ENCODE measurements at regions of chr10 and their contacts with region 1.

Region 1: GRCh38 chr10:33134011-33134751 is 176.2 kb upstream of the ITGB1 start:
- DNase-seq: no peak
- ATAC-seq: peak; percentile 64
- H3K4me3 ChIP-seq: no peak overlapping the region
- H3K4me3 Mint-ChIP-seq: no peak overlapping the region
- H3K27ac ChIP-seq: no peak overlapping the region
- H3K27ac Mint-ChIP-seq: peak overlapping the region; percentile 67
- H3K4me1 ChIP-seq: peaks cover 9 to 21% of the 10 kb centered on the region in 2 donors
- H3K4me1 Mint-ChIP-seq: peaks cover 30% of the 10 kb centered on the region
- H3K27me3 ChIP-seq: no peaks in the 10 kb centered on the region
- H3K27me3 Mint-ChIP-seq: peaks cover 3% of the 10 kb centered on the region
- CTCF ChIP-seq: no peak

Region 2: DNA sequence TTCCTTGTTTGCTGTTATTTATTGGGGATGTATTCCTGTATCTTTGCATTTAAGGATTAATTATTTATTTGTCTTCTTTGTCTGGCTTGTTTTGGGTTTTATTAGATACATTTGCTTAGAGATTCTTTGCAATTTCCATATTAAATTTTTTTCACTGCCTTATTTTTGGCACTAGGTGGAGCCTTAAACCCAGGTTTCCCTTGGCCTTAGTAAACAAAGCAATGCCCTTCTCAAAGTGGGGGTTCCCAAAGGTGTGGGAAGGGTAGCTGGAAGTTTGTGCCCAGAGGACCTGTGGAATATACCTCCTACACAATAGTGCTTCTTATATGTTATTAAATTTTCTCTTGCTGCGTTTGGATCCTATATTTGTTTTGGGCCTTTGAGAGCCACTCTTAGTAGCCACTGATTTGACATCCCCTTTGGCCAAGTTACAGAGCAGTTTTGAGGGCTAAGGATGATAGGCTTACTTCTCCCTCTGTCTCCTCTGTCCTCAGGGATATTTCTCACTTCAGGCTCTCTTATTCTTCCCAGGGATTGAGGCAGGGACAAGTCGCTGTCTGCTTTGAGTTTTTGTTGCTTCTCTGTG is 338.5 kb before region 1 on chr10:
- CTCF ChIA-PET with region 1: no interaction called
- POLR2A ChIA-PET with region 1: no interaction called
- intact Hi-C with region 1: loop called (anchors 1 kb)
- DNase-seq: peak; percentile 57
- ATAC-seq: no peak
- H3K4me3 ChIP-seq: no peak overlapping the region
- H3K4me3 Mint-ChIP-seq: no peak overlapping the region
- H3K27ac ChIP-seq: no peak overlapping the region
- H3K27ac Mint-ChIP-seq: no peak overlapping the region
- H3K4me1 ChIP-seq: no peaks in the 10 kb centered on the region
- H3K4me1 Mint-ChIP-seq: no peaks in the 10 kb centered on the region
- H3K27me3 ChIP-seq: no peaks in the 10 kb centered on the region
- H3K27me3 Mint-ChIP-seq: no peaks in the 10 kb centered on the region
- CTCF ChIP-seq: peak; percentile 78

Region 3: DNA sequence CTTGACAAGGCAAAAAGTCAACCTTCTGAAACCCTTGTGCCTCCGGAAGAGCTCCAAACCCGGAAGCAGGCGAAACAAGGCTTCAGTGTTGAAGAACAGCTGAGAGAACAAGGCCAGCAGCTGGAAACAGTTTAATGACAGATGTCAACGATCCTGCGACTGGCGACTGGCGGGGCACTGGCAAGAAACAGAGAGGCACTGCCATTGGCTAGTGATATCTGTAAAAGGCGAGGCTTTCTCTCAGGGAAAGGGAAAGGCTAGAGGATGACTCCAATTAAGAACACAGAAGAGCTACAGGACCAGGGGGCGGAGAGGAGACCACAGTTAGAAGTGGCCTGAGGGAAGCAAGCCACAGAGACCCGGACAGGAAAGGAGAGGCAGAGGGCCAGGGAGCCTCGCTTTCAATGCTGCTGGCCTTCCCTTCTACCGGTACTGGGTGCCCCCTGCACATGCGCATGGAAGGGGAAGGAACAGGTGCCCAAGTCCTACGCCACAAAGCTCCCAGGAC is 195.6 kb before region 1 on chr10:
- CTCF ChIA-PET with region 1: no interaction called
- POLR2A ChIA-PET with region 1: no interaction called
- intact Hi-C with region 1: loop called (anchors 5 kb)
- DNase-seq: no peak
- ATAC-seq: no peak
- H3K4me3 ChIP-seq: no peak overlapping the region
- H3K4me3 Mint-ChIP-seq: peak overlapping the region; percentile 33
- H3K27ac ChIP-seq: peak overlapping the region in 1 of 2 donors; percentile 4
- H3K27ac Mint-ChIP-seq: peak overlapping the region; percentile 67
- H3K4me1 ChIP-seq: peaks cover 33 to 37% of the 10 kb centered on the region in 2 donors
- H3K4me1 Mint-ChIP-seq: peaks cover 53% of the 10 kb centered on the region
- H3K27me3 ChIP-seq: no peaks in the 10 kb centered on the region
- H3K27me3 Mint-ChIP-seq: no peaks in the 10 kb centered on the region
- CTCF ChIP-seq: no peak

Region 4: GRCh38 chr10:33074443-33074842 is 59.7 kb before region 1 on chr10:
- CTCF ChIA-PET with region 1: no interaction called
- POLR2A ChIA-PET with region 1: no interaction called
- intact Hi-C with region 1: no loop called
- DNase-seq: no peak
- ATAC-seq: no peak
- H3K4me3 ChIP-seq: no peak overlapping the region
- H3K4me3 Mint-ChIP-seq: no peak overlapping the region
- H3K27ac ChIP-seq: no peak overlapping the region
- H3K27ac Mint-ChIP-seq: no peak overlapping the region
- H3K4me1 ChIP-seq: no peaks in the 10 kb centered on the region
- H3K4me1 Mint-ChIP-seq: no peaks in the 10 kb centered on the region
- H3K27me3 ChIP-seq: no peaks in the 10 kb centered on the region
- H3K27me3 Mint-ChIP-seq: no peaks in the 10 kb centered on the region
- CTCF ChIP-seq: no peak

Region 5: GRCh38 chr10:33161550-33162247 is 27.5 kb after region 1 on chr10:
- CTCF ChIA-PET with region 1: no interaction called
- POLR2A ChIA-PET with region 1: no interaction called
- intact Hi-C with region 1: no loop called
- DNase-seq: no peak
- ATAC-seq: no peak
- H3K4me3 ChIP-seq: no peak overlapping the region
- H3K4me3 Mint-ChIP-seq: no peak overlapping the region
- H3K27ac ChIP-seq: no peak overlapping the region
- H3K27ac Mint-ChIP-seq: peak overlapping the region; percentile 18
- H3K4me1 ChIP-seq: no peaks in the 10 kb centered on the region
- H3K4me1 Mint-ChIP-seq: peaks cover 2% of the 10 kb centered on the region
- H3K27me3 ChIP-seq: no peaks in the 10 kb centered on the region
- H3K27me3 Mint-ChIP-seq: peaks cover 12% of the 10 kb centered on the region
- CTCF ChIP-seq: no peak

Measured in B cell (primary cell).